ENCODE measurements at regions of chr14 and their contacts with region 1.

Region 1: GRCh38 chr14:85528080-85528896 is 1.7 kb upstream of the FLRT2 start:
- DNase-seq: peak; percentile 23 to 35
- ATAC-seq: peak in 1 of 2 donors; percentile 38
- H3K4me3 ChIP-seq: peak overlapping the region; percentile 73 to 79 (median 74)
- H3K27ac ChIP-seq: peak overlapping the region; percentile 60 to 91 (median 67)
- H3K4me1 ChIP-seq: peaks cover 0 to 4% of the 10 kb centered on the region in 2 donors
- H3K27me3 ChIP-seq: peaks cover 0 to 2% (median 0%) of the 10 kb centered on the region in 3 donors
- CTCF ChIP-seq: peak in 4 of 5 experiments; percentile 24 to 50 (median 36)
- POLR2A ChIP-seq: no peak

Region 2: GRCh38 chr14:85415015-85415712 is 113.1 kb before region 1 on chr14:
- in situ Hi-C with region 1: no loop called
- intact Hi-C with region 1: loop called (anchors 2 kb)
- DNase-seq: peak; percentile 6 to 19
- ATAC-seq: peak; percentile 77 to 85
- H3K4me3 ChIP-seq: no peak overlapping the region
- H3K27ac ChIP-seq: no peak overlapping the region
- H3K4me1 ChIP-seq: peaks cover 0 to 5% of the 10 kb centered on the region in 2 donors
- H3K27me3 ChIP-seq: no peaks in the 10 kb centered on the region
- CTCF ChIP-seq: peak in 1 of 5 experiments; percentile 15
- POLR2A ChIP-seq: no peak

Region 3: DNA sequence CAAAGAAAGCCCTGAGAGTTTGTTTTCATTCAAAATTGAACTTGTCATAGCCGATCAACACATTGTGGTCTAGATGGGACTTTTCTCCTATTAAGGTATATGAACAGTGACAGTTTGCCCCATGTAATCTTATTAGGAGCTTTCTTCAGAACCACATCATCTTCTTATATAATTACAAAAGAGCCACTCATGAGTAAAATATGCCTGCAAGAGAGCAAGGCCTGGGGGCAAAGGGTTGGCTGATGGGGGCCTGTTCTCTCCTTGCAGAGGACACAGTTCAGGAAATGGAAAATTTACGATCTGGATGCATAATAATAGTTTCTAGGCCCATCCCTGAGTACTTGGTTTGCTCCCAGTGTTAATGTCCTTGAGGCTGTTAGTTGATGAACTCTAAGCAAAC is 89.5 kb after region 1 on chr14:
- in situ Hi-C with region 1: loop called in 1 of 4 experiments (anchors 10 kb)
- intact Hi-C with region 1: loop called (anchors 2 kb)
- DNase-seq: no peak
- ATAC-seq: no peak
- H3K4me3 ChIP-seq: no peak overlapping the region
- H3K27ac ChIP-seq: peak overlapping the region; percentile 34 to 68 (median 54)
- H3K4me1 ChIP-seq: peaks cover 16 to 28% of the 10 kb centered on the region in 2 donors
- H3K27me3 ChIP-seq: no peaks in the 10 kb centered on the region
- CTCF ChIP-seq: no peak
- POLR2A ChIP-seq: no peak

Region 4: GRCh38 chr14:85625925-85626585 is 97.8 kb after region 1 on chr14:
- in situ Hi-C with region 1: no loop called
- intact Hi-C with region 1: loop called (anchors 5 kb)
- DNase-seq: peak; percentile 35 to 68
- ATAC-seq: peak; percentile 98 to 99
- H3K4me3 ChIP-seq: no peak overlapping the region
- H3K27ac ChIP-seq: peak overlapping the region; percentile 39 to 80 (median 78)
- H3K4me1 ChIP-seq: peaks cover 14 to 18% of the 10 kb centered on the region in 2 donors
- H3K27me3 ChIP-seq: no peaks in the 10 kb centered on the region
- CTCF ChIP-seq: no peak
- POLR2A ChIP-seq: no peak

Region 5: DNA sequence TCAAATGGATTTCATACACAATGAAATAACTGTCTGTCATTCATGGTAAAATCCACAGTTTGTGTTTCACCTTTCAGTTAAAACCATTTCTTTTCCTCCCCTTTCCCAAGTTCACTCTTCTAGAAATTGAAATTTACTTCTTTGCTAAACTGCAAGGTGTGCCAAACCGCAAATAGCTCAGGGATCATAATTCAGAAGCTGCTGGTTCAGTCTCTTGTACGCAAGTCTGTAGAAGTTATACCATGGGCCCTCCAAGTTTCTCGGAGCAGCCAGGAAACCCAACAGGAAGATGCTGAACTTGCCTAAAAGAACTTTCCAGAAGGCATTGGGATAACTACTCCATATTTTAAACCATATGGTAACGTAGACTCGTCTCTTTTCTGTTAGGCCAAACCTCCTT is 270.6 kb after region 1 on chr14:
- in situ Hi-C with region 1: no loop called
- intact Hi-C with region 1: loop called (anchors 5 kb)
- DNase-seq: peak in 1 of 2 donors; percentile 5
- ATAC-seq: peak; percentile 57 to 60
- H3K4me3 ChIP-seq: no peak overlapping the region
- H3K27ac ChIP-seq: peak overlapping the region; percentile 51 to 67 (median 56)
- H3K4me1 ChIP-seq: peaks cover 27 to 38% of the 10 kb centered on the region in 2 donors
- H3K27me3 ChIP-seq: no peaks in the 10 kb centered on the region
- CTCF ChIP-seq: no peak
- POLR2A ChIP-seq: no peak